ENCODE measurements at regions of chr15 and their contacts with region 1.

Region 1: GRCh38 chr15:45641374-45641781 is 6.5 kb downstream of the SQOR start:
- DNase-seq: peak; percentile 90
- ATAC-seq: peak; percentile 63
- H3K4me3 ChIP-seq: peak overlapping the region; percentile 50; the same call in 1 of the 2 replicates
- H3K27ac ChIP-seq: peak overlapping the region; percentile 100
- H3K4me1 ChIP-seq: peaks cover 91% of the 10 kb centered on the region
- H3K27me3 ChIP-seq: no peaks in the 10 kb centered on the region
- CTCF ChIP-seq: no peak

Region 2: GRCh38 chr15:46127361-46127874 is 486.0 kb after region 1 on chr15:
- CTCF ChIA-PET with region 1: no interaction called
- POLR2A ChIA-PET with region 1: no interaction called
- intact Hi-C with region 1: loop called (anchors 5 kb)
- DNase-seq: peak; percentile 90
- ATAC-seq: peak; percentile 88
- H3K4me3 ChIP-seq: peak overlapping the region; percentile 51
- H3K27ac ChIP-seq: peak overlapping the region; percentile 100
- H3K4me1 ChIP-seq: peaks cover 30% of the 10 kb centered on the region
- H3K27me3 ChIP-seq: no peaks in the 10 kb centered on the region
- CTCF ChIP-seq: no peak